Common myeloid progenitor, CD34-positive (primary cell): ENCODE measurements at regions of chr11 and their contacts with region 1.

Region 1: DNA sequence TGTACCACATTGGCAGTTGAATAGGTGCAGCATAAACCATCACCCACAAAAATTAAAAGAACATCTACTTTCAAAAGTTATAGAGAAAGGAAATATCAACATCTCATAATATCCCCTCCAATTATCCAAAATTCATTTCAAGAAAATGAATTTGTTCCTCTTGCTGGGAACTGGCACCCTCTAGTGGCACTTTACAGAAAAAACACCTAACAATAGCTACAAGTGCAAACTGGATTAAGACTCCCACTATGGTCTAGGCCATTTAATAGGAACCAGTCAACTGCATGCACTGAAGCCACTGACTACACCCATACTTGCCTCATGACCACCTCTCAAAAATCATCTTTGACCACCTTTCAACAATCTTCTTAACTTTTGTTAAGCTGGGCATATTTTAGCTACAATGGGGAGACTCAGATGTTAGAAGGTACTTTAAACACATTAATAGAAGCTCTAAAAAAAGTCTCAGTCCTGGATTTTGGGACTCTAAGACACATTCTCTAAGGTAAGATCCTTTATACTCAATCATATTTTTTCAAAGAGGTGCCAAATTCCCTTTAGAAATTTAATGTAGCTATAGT is 17.3 kb downstream of the TRAF6 start:
- DNase-seq: peak; percentile 73 to 87 (median 80)
- H3K4me3 ChIP-seq: no peak overlapping the region
- H3K27ac ChIP-seq: no peak overlapping the region
- H3K4me1 ChIP-seq: peaks cover 1 to 15% (median 9%) of the 10 kb centered on the region in 4 experiments
- H3K27me3 ChIP-seq: no peaks in the 10 kb centered on the region

Region 2: GRCh38 chr11:36265793-36266628 is 226.8 kb before region 1 on chr11:
- CTCF ChIA-PET with region 1: interaction called, 12 read pairs
- POLR2A ChIA-PET with region 1: no interaction called
- DNase-seq: peak; percentile 37 to 65 (median 45)
- H3K4me3 ChIP-seq: no peak overlapping the region
- H3K27ac ChIP-seq: no peak overlapping the region
- H3K4me1 ChIP-seq: peaks cover 0 to 2% (median 0%) of the 10 kb centered on the region in 4 experiments
- H3K27me3 ChIP-seq: peaks cover 0 to 25% (median 9%) of the 10 kb centered on the region in 5 experiments

Region 3: GRCh38 chr11:36289226-36289852 is 203.5 kb before region 1 on chr11 and contains the start of gene COMMD9:
- CTCF ChIA-PET with region 1: interaction called, 53 read pairs
- POLR2A ChIA-PET with region 1: no interaction called
- DNase-seq: peak; percentile 93 to 96 (median 95)
- H3K4me3 ChIP-seq: peak within 1 kb of the TSS; percentile 87 to 100 (median 97)
- H3K27ac ChIP-seq: peak within 1 kb of the TSS; percentile 51 to 82
- H3K4me1 ChIP-seq: peaks cover 6 to 18% (median 13%) of the 10 kb centered on the region in 4 experiments
- H3K27me3 ChIP-seq: no peaks in the 10 kb centered on the region

Region 4: GRCh38 chr11:36300651-36301050 is 192.2 kb before region 1 on chr11:
- CTCF ChIA-PET with region 1: interaction called, 13 read pairs
- POLR2A ChIA-PET with region 1: no interaction called
- DNase-seq: no peak
- H3K4me3 ChIP-seq: no peak overlapping the region
- H3K27ac ChIP-seq: no peak overlapping the region
- H3K4me1 ChIP-seq: peaks cover 0 to 5% (median 2%) of the 10 kb centered on the region in 4 experiments
- H3K27me3 ChIP-seq: no peaks in the 10 kb centered on the region

Region 5: GRCh38 chr11:36509694-36510566 is 17.1 kb after region 1 on chr11 and contains the start of gene TRAF6:
- CTCF ChIA-PET with region 1: interaction called, 18 read pairs
- POLR2A ChIA-PET with region 1: no interaction called
- DNase-seq: peak; percentile 87 to 91 (median 88)
- H3K4me3 ChIP-seq: peak within 1 kb of the TSS; percentile 70 to 100 (median 96)
- H3K27ac ChIP-seq: peak within 1 kb of the TSS; percentile 72 to 91
- H3K4me1 ChIP-seq: peaks cover 10 to 21% (median 15%) of the 10 kb centered on the region in 4 experiments
- H3K27me3 ChIP-seq: no peaks in the 10 kb centered on the region